Gastrocnemius medialis (tissue), 4 donors: ENCODE measurements at regions of chr6 and their contacts with region 1.

Region 1: DNA sequence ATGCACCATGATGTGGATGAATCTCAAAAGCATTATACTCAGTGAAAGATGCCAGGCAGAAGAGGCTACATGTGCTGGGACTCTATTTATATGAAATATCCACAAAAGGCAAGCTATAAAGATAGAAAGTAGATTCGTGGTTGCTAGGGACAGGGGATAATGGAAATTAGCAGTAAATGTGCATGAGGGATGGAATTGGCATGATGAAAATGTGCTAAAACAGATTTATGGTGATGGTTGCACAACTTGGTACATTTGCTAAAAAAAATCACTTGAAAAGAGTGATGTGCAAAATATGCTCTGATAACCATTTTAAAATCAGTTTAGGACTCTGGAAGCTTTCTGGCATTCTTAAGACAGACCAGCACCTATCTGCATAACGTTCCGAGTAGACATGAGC is 61.6 kb downstream of the ALDH8A1 start:
- DNase-seq: no peak
- ATAC-seq: no peak
- H3K4me3 ChIP-seq: no peak overlapping the region
- H3K27ac ChIP-seq: no peak overlapping the region
- H3K4me1 ChIP-seq: no peaks in the 10 kb centered on the region
- H3K27me3 ChIP-seq: no peaks in the 10 kb centered on the region
- CTCF ChIP-seq: no peak
- POLR2A ChIP-seq: no peak

Region 2: DNA sequence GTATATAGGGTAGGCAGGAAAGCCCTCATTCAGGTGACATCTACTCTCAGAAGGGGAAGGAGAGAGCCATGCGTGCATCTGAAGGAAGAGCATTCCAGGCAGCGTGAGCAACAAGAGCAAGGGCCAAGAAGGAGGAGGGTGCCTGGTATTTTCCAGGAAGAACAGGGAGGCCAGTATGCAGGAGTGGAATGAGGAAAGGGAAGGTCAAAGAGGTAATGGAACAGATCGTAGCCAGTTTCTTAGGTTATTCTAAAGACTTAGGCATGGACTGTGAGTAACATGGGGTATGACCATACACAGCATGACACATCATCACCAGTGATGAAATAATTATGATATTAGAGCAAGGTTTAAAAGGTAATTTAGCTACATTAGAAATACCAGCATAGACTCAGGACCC is 37.5 kb after region 1 on chr6:
- in situ Hi-C with region 1: no loop called
- intact Hi-C with region 1: loop called (anchors 5 kb)
- DNase-seq: no peak
- ATAC-seq: no peak
- H3K4me3 ChIP-seq: no peak overlapping the region
- H3K27ac ChIP-seq: no peak overlapping the region
- H3K4me1 ChIP-seq: no peaks in the 10 kb centered on the region
- H3K27me3 ChIP-seq: no peaks in the 10 kb centered on the region
- CTCF ChIP-seq: no peak
- POLR2A ChIP-seq: no peak

Region 3: GRCh38 chr6:135105710-135106109 is 217.4 kb after region 1 on chr6:
- in situ Hi-C with region 1: no loop called
- intact Hi-C with region 1: no loop called
- DNase-seq: no peak
- ATAC-seq: no peak
- H3K4me3 ChIP-seq: no peak overlapping the region
- H3K27ac ChIP-seq: no peak overlapping the region
- H3K4me1 ChIP-seq: no peaks in the 10 kb centered on the region
- H3K27me3 ChIP-seq: no peaks in the 10 kb centered on the region
- CTCF ChIP-seq: no peak
- POLR2A ChIP-seq: no peak